Activated naive CD8-positive, alpha-beta T cell treated with anti-CD3 and anti-CD28 coated beads, Interleukin-2, amount 10 ng/mL, durations not matched to agents 7 days and 5 days (primary cell): ENCODE measurements at regions of chr4 and their contacts with region 1.

Region 1: GRCh38 chr4:75724066-75724866 is at the start of gene USO1:
- DNase-seq: peak; percentile 99
- ATAC-seq: peak; percentile 90
- H3K4me3 Mint-ChIP-seq: peak within 1 kb of the TSS; percentile 94
- H3K27ac Mint-ChIP-seq: peak within 1 kb of the TSS; percentile 98
- H3K4me1 Mint-ChIP-seq: peaks cover 39% of the 10 kb centered on the region
- H3K27me3 Mint-ChIP-seq: no peaks in the 10 kb centered on the region
- total RNA-seq, gene USO1: 32.3 to 34.6 TPM

Region 2: GRCh38 chr4:75630174-75630936 is 93.9 kb before region 1 on chr4 and contains the start of gene CDKL2:
- POLR2A ChIA-PET with region 1: interaction called, 12 read pairs
- DNase-seq: peak; percentile 92
- ATAC-seq: peak; percentile 99
- H3K4me3 Mint-ChIP-seq: peak within 1 kb of the TSS; percentile 85
- H3K27ac Mint-ChIP-seq: peak within 1 kb of the TSS; percentile 69
- H3K4me1 Mint-ChIP-seq: peaks cover 13% of the 10 kb centered on the region
- H3K27me3 Mint-ChIP-seq: peaks cover 2% of the 10 kb centered on the region
- total RNA-seq, gene CDKL2: 0.22 to 0.45 TPM

Region 3: GRCh38 chr4:75673027-75673958 is 51.0 kb before region 1 on chr4 and contains the start of gene G3BP2:
- POLR2A ChIA-PET with region 1: interaction called, 52 read pairs
- DNase-seq: peak; percentile 93
- ATAC-seq: peak; percentile 95
- H3K4me3 Mint-ChIP-seq: peak within 1 kb of the TSS; percentile 94
- H3K27ac Mint-ChIP-seq: peak within 1 kb of the TSS; percentile 99
- H3K4me1 Mint-ChIP-seq: peaks cover 41% of the 10 kb centered on the region
- H3K27me3 Mint-ChIP-seq: no peaks in the 10 kb centered on the region
- total RNA-seq, gene G3BP2: 165 to 179 TPM

Region 4: GRCh38 chr4:75698162-75698962 is 25.9 kb before region 1 on chr4:
- POLR2A ChIA-PET with region 1: interaction called, 11 read pairs
- DNase-seq: peak; percentile 39
- ATAC-seq: peak; percentile 77
- H3K4me3 Mint-ChIP-seq: peak overlapping the region; percentile 54
- H3K27ac Mint-ChIP-seq: peak overlapping the region; percentile 83
- H3K4me1 Mint-ChIP-seq: peaks cover 35% of the 10 kb centered on the region
- H3K27me3 Mint-ChIP-seq: no peaks in the 10 kb centered on the region